ENCODE measurements at regions of chr15 and their contacts with region 1.

Region 1: GRCh38 chr15:96345560-96346399 is 15.3 kb downstream of the NR2F2 start:
- DNase-seq: peak; percentile 64 to 80 (median 80)
- H3K4me3 ChIP-seq: peak overlapping the region in 2 of 7 experiments; percentile 26 to 42
- H3K27ac ChIP-seq: no peak overlapping the region
- H3K4me1 ChIP-seq: peaks cover 0 to 8% (median 3%) of the 10 kb centered on the region in 4 experiments
- H3K27me3 ChIP-seq: peaks cover 26 to 100% (median 69%) of the 10 kb centered on the region in 5 experiments

Region 2: GRCh38 chr15:95259513-95259912 is 1086.3 kb before region 1 on chr15:
- CTCF ChIA-PET with region 1: interaction called, 23 read pairs
- POLR2A ChIA-PET with region 1: no interaction called
- DNase-seq: peak; percentile 58 to 77 (median 69)
- H3K4me3 ChIP-seq: no peak overlapping the region
- H3K27ac ChIP-seq: no peak overlapping the region
- H3K4me1 ChIP-seq: no peaks in the 10 kb centered on the region
- H3K27me3 ChIP-seq: peaks cover 8 to 67% (median 22%) of the 10 kb centered on the region in 5 experiments

Region 3: DNA sequence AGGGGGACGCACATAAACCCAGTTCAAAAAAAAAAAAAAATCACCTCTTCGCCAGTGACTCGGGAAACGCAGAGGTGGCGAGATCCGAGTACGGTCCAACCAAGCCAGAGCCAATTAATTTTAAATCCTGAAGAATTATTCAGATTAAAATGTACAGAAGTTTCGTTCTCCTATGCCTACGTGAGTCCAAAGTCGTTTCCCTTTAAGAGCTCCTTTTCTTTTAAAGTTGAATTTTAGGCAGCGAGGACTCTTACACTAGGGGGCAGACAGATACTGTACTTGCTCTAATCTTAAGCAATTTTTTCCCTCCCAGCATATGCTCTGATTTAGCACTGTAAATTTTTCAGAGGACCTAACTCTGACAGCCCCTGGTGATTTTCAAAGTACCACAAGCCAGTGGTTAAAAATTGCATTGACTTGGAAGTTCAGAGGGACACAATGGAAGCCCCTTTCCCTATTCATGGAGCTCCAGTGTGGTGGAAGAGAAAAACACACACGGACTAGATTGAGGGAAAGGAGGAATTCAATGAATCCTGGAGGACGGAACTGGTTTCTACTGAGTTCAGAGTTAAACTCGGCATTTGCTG is 18.5 kb before region 1 on chr15:
- CTCF ChIA-PET with region 1: interaction called, 13 read pairs
- POLR2A ChIA-PET with region 1: no interaction called
- DNase-seq: peak; percentile 75 to 85 (median 84)
- H3K4me3 ChIP-seq: no peak overlapping the region
- H3K27ac ChIP-seq: peak overlapping the region in 1 of 2 experiments; percentile 68
- H3K4me1 ChIP-seq: peaks cover 0 to 20% (median 9%) of the 10 kb centered on the region in 4 experiments
- H3K27me3 ChIP-seq: peaks cover 26 to 96% (median 65%) of the 10 kb centered on the region in 5 experiments

Region 4: DNA sequence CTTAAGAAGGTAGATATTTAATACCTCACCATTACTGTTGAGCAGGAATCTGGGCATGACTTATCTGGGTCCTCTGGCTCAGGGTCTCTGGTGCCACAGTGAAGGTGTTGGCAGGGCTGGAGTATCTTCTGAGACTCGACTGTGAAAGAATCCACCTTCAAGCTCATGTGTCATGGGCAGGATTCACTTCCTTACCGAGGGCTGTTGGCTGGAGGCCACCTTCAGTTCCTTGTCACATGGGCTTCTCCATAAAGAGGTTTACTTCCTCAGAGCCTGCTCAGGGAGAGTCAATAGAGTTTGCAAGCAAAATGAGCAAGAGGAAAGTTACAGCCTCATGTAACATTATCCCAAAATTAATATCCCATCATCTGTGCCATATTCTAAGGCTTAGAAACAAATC is 444.2 kb after region 1 on chr15:
- CTCF ChIA-PET with region 1: no interaction called
- POLR2A ChIA-PET with region 1: no interaction called
- DNase-seq: no peak
- H3K4me3 ChIP-seq: no peak overlapping the region
- H3K27ac ChIP-seq: no peak overlapping the region
- H3K4me1 ChIP-seq: no peaks in the 10 kb centered on the region
- H3K27me3 ChIP-seq: no peaks in the 10 kb centered on the region